Activated T-helper 1 cell treated with anti-CD3 and anti-CD28 coated beads, Interleukin-12 subunit alpha, Interleukin-12 subunit beta, Interleukin-2, Interleukin-4 antibody, amounts not matched to agents 30 ng/mL and 10 ng/mL and 1 ng/mL, durations not matched to agents 14 hours and 24 hours and 36 hours (primary cell): ENCODE measurements at regions of chr6 and their contacts with region 1.

Region 1: DNA sequence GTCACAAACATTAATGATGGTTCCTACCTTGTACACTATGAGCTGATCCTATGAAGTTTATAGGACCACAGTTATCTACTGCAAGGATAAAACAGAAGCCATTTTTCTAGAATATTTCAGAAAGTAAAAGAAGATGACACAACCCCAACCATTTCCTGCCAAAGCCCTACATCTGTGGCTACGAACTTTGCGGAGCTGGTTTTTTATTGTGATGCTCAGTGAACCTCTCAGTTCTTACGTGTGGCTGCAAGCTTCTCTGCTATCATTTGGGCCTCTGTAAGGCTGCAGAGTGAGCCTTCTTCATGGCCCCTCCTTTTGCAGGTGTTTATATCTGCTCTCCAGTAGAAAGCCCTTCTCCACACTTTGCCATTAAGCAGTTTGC is 17.8 kb upstream of the TAGAP start:
- DNase-seq: peak; percentile 70
- H3K4me3 Mint-ChIP-seq: peak overlapping the region; percentile 67
- H3K27ac Mint-ChIP-seq: peak overlapping the region; percentile 93
- H3K4me1 Mint-ChIP-seq: peaks cover 92% of the 10 kb centered on the region
- H3K27me3 Mint-ChIP-seq: peaks cover 2% of the 10 kb centered on the region

Region 2: GRCh38 chr6:158293122-158293521 is 769.4 kb before region 1 on chr6:
- intact Hi-C with region 1: no loop called
- DNase-seq: no peak
- H3K4me3 Mint-ChIP-seq: no peak overlapping the region
- H3K27ac Mint-ChIP-seq: no peak overlapping the region
- H3K4me1 Mint-ChIP-seq: peaks cover 30% of the 10 kb centered on the region
- H3K27me3 Mint-ChIP-seq: no peaks in the 10 kb centered on the region

Region 3: GRCh38 chr6:159017757-159018559 is 44.6 kb before region 1 on chr6:
- intact Hi-C with region 1: loop called (anchors 1 kb)
- DNase-seq: no peak
- H3K4me3 Mint-ChIP-seq: peak overlapping the region; percentile 38
- H3K27ac Mint-ChIP-seq: peak overlapping the region; percentile 92
- H3K4me1 Mint-ChIP-seq: peaks cover 29% of the 10 kb centered on the region
- H3K27me3 Mint-ChIP-seq: no peaks in the 10 kb centered on the region

Region 4: DNA sequence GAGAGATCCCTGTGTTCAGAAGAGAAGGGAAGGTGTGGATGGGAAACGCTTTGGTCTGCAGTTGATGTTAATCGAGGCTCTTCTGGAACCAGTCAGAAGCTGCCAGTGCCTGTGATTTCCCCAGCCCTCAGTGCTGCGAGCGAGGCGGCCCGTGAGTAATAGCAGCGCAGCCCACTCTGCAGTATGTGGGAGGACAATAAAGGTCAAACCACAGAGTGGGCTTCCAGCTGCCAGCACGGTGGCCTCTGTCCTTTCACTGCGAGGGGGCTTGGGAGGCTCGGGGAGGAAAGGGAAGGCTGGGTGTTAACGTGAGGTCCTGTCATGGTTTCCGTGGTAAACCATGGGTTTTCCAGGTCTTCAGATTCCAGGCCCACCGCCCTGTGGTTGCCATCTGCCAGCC is 14.6 kb after region 1 on chr6:
- intact Hi-C with region 1: loop called (anchors 1 kb)
- DNase-seq: no peak
- H3K4me3 Mint-ChIP-seq: peak overlapping the region; percentile 23
- H3K27ac Mint-ChIP-seq: peak overlapping the region; percentile 67
- H3K4me1 Mint-ChIP-seq: peaks cover 46% of the 10 kb centered on the region
- H3K27me3 Mint-ChIP-seq: peaks cover 10% of the 10 kb centered on the region

Region 5: DNA sequence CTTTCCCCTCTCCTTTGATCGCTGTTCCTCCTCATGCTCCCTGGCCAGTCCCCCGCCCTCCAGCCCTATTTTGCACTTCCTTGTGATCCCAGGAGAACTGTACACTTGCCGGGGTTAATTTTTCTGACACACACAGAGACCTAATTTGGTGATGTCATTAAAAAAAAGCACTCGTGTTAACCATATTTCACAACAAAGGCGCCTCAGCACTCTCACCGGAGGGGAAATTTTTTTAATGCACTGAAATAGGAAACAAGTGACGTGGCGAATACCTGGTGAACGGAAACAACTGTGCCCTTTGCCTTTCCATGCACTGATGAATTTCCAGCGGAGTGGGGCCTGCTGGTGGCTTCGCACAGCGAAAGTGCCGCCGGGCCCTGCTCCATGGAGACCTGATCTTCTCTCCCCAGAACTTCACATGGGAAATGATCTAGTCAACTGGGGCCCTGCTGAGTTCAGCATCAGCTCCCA is 36.1 kb after region 1 on chr6:
- intact Hi-C with region 1: loop called (anchors 1 kb)
- DNase-seq: peak; percentile 67
- H3K4me3 Mint-ChIP-seq: peak overlapping the region; percentile 76
- H3K27ac Mint-ChIP-seq: peak overlapping the region; percentile 96
- H3K4me1 Mint-ChIP-seq: peaks cover 88% of the 10 kb centered on the region
- H3K27me3 Mint-ChIP-seq: no peaks in the 10 kb centered on the region